Right cardiac atrium (tissue), 5 donors: ENCODE measurements at regions of chr19 and their contacts with region 1.

Region 1: GRCh38 chr19:46480415-46480814 is 9.1 kb upstream of the PNMA8A start:
- DNase-seq: peak in 2 of 3 donors; percentile 69 to 76
- ATAC-seq: peak; percentile 70 to 82
- H3K4me3 ChIP-seq: no peak overlapping the region
- H3K27ac ChIP-seq: no peak overlapping the region
- H3K4me1 ChIP-seq: no peaks in the 10 kb centered on the region
- H3K27me3 ChIP-seq: no peaks in the 10 kb centered on the region

Region 2: DNA sequence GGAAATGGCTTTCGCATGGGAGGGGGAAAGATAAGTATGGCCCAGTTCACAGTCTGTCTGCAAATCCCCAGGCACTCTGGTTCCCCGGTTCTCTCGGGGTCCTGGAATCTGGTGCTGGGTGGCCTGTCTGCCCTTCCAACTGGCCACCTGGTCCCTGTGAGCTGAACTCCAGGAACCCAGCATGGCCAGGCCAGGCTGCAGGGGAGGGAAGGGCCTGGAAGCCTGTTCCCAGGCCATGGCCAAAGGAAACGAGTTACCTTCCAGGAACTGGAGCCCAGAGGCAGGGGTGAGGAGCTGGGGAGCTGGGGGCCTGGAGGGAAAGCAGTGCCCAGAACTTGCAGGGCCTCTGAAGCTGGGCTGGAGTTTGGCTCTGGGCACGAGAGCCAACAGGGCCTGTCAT is 32.6 kb before region 1 on chr19:
- intact Hi-C with region 1: loop called in 1 of 4 experiments (anchors 5 kb)
- DNase-seq: peak; percentile 31 to 88 (median 86)
- ATAC-seq: peak; percentile 38 to 82
- H3K4me3 ChIP-seq: no peak overlapping the region
- H3K27ac ChIP-seq: no peak overlapping the region
- H3K4me1 ChIP-seq: no peaks in the 10 kb centered on the region
- H3K27me3 ChIP-seq: no peaks in the 10 kb centered on the region